ENCODE measurements at regions of chr1 and their contacts with region 1.

Region 1: GRCh38 chr1:168439456-168440375 is 104.1 kb downstream of the XCL2 start:
- DNase-seq: peak; percentile 67 to 92
- H3K4me3 ChIP-seq: no peak overlapping the region
- CTCF ChIP-seq: peak in 1 of 3 donors; percentile 61
- POLR2A ChIP-seq: no peak

Region 2: DNA sequence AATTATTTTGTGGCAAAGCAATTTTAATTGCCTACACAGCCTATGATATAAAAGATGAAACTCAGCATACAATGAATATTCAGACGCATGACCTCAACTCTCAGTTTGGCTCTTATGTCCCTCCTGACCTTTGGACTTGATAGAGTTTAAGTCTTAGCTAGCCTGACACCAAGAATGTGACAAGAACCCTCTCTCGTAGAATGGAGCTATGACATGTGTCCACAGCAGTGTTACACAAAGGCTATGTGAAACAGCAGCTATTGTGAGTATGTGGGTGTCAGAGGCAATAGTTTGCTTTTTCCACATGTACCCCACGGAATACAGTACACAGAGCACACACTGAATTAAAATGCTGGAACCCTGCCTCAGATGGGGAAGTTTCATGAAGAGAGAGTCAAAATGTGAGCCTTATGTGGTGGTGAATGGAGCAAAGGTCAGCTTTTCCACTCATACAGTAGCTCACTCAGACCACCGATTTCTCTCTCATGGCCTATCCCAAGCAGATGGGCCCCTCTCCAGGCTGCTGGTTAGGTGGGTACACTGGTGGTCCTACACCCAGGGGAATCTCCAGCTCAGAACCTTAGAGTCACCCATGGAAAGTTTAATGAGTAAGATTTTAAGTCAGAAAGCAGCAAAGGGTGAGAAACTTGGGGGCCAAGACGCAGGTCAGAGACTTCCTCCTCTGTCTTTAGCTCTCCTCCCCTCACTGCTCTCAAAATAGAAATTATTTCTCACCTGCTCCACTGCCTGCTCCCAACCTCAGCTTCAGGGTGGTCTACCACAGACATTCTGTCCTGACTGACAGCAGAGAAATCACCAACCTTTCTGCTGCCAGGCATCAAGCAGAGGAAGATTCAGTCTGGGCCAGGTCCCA is 114.2 kb after region 1 on chr1:
- intact Hi-C with region 1: loop called (anchors 10 kb)
- DNase-seq: no peak
- H3K4me3 ChIP-seq: no peak overlapping the region
- CTCF ChIP-seq: no peak
- POLR2A ChIP-seq: no peak